CD4-positive, alpha-beta memory T cell (primary cell): ENCODE measurements at regions of chr12 and their contacts with region 1.

Region 1: DNA sequence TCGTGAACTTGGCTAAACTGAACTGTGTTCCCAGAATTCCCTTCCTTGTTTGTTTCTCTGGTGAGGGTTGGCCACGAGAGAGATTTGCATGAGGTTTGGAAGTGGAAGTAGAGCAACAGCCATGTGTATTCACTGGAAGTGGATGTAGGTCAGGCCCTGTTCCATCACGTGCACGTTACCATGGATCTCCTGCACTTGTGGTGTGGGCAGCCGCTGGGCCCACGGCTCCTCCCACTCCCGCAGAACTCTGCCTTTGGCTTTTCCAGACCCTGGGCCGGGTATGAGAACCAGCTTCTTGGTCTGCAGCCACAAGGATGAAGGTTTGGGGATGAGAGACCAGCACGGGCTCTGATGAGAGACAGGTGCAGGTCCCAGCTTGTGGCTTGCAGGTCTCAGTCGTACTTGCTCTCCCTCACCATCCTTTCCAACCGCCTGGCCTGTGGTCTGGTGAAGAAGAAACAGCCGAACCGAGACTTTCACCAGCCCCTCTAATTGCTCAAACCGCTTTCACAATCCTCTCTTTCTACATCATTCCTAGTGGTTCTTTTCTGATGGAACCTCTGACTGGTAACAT is 94.9 kb downstream of the DUSP16 start:
- DNase-seq: peak; percentile 76 to 88 (median 85)
- H3K4me3 ChIP-seq: peak overlapping the region in 1 of 2 donors; percentile 12
- H3K4me3 Mint-ChIP-seq: peak overlapping the region; percentile 52 to 83 (median 62)
- H3K27ac ChIP-seq: peak overlapping the region; percentile 82
- H3K27ac Mint-ChIP-seq: peak overlapping the region; percentile 98 to 100 (median 99)
- H3K4me1 ChIP-seq: peaks cover 78% of the 10 kb centered on the region
- H3K4me1 Mint-ChIP-seq: peaks cover 55 to 90% (median 76%) of the 10 kb centered on the region in 4 donors
- H3K27me3 ChIP-seq: no peaks in the 10 kb centered on the region
- H3K27me3 Mint-ChIP-seq: no peaks in the 10 kb centered on the region

Region 2: GRCh38 chr12:12442548-12443071 is 25.2 kb before region 1 on chr12:
- CTCF ChIA-PET with region 1: interaction called, 63 read pairs
- POLR2A ChIA-PET with region 1: interaction called, 252 read pairs
- intact Hi-C with region 1: loop called (anchors 1 kb)
- DNase-seq: no peak
- H3K4me3 ChIP-seq: no peak overlapping the region
- H3K4me3 Mint-ChIP-seq: peak overlapping the region in 6 of 8 donors; percentile 8 to 85 (median 70)
- H3K27ac ChIP-seq: peak overlapping the region; percentile 65
- H3K27ac Mint-ChIP-seq: peak overlapping the region; percentile 90 to 99 (median 98)
- H3K4me1 ChIP-seq: peaks cover 95% of the 10 kb centered on the region
- H3K4me1 Mint-ChIP-seq: peaks cover 68 to 93% (median 80%) of the 10 kb centered on the region in 4 donors
- H3K27me3 ChIP-seq: no peaks in the 10 kb centered on the region
- H3K27me3 Mint-ChIP-seq: no peaks in the 10 kb centered on the region

Region 3: DNA sequence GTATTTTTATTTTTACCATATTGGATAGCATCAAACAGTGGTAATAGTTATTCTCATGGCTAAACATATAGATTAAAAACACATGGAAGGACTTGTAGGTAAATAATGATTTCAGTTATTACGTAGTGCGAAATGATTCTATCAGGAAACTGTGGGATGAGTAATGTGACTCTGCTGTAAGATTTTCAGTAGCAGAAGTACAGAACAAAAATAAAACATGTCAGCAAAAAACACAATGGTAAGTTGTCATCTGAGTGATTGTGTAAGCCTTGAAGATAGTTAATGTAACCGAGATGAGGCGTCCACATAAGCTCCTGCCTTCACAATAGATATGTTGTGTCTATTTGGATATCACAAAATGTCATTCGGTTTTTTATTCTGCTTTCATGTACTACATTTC is 11.1 kb before region 1 on chr12:
- CTCF ChIA-PET with region 1: interaction called, 33 read pairs
- POLR2A ChIA-PET with region 1: interaction called, 970 read pairs
- intact Hi-C with region 1: loop called (anchors 1 kb)
- DNase-seq: peak in 4 of 5 donors; percentile 54 to 72 (median 54)
- H3K4me3 ChIP-seq: peak overlapping the region in 1 of 2 donors; percentile 27
- H3K4me3 Mint-ChIP-seq: peak overlapping the region; percentile 23 to 78 (median 66)
- H3K27ac ChIP-seq: peak overlapping the region; percentile 65
- H3K27ac Mint-ChIP-seq: peak overlapping the region; percentile 78 to 97 (median 92)
- H3K4me1 ChIP-seq: peaks cover 40% of the 10 kb centered on the region
- H3K4me1 Mint-ChIP-seq: peaks cover 21 to 60% (median 45%) of the 10 kb centered on the region in 4 donors
- H3K27me3 ChIP-seq: no peaks in the 10 kb centered on the region
- H3K27me3 Mint-ChIP-seq: no peaks in the 10 kb centered on the region

Region 4: DNA sequence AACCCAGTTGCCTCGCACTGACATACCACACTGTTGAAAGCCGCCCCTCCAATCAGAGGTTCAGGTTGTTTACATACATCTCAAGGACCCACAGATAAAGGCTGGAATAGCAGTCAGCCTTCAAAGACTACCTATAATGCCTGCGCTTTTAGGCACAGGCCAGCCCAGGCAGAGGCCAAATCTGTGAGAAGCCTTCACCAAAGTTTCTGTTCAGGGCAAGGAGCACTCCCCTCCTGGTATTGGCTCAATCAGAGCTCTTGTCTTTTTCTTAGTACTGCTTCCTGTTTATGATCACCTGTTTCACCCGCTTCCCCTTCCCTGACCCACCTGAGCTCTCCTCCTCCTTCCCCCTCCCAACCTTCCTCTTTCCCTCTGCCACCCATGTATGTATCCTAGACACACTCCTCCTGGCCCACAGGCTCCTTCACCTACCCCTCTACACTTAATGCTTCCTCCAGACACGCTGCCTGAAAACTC is 60.1 kb after region 1 on chr12:
- CTCF ChIA-PET with region 1: no interaction called
- POLR2A ChIA-PET with region 1: interaction called, 11 read pairs
- intact Hi-C with region 1: no loop called
- DNase-seq: peak in 3 of 5 donors; percentile 25 to 43 (median 31)
- H3K4me3 ChIP-seq: no peak overlapping the region
- H3K4me3 Mint-ChIP-seq: peak overlapping the region in 7 of 8 donors; percentile 40 to 80 (median 71)
- H3K27ac ChIP-seq: peak overlapping the region; percentile 56
- H3K27ac Mint-ChIP-seq: peak overlapping the region; percentile 64 to 96 (median 94)
- H3K4me1 ChIP-seq: peaks cover 52% of the 10 kb centered on the region
- H3K4me1 Mint-ChIP-seq: peaks cover 37 to 61% (median 52%) of the 10 kb centered on the region in 4 donors
- H3K27me3 ChIP-seq: no peaks in the 10 kb centered on the region
- H3K27me3 Mint-ChIP-seq: no peaks in the 10 kb centered on the region

Region 5: DNA sequence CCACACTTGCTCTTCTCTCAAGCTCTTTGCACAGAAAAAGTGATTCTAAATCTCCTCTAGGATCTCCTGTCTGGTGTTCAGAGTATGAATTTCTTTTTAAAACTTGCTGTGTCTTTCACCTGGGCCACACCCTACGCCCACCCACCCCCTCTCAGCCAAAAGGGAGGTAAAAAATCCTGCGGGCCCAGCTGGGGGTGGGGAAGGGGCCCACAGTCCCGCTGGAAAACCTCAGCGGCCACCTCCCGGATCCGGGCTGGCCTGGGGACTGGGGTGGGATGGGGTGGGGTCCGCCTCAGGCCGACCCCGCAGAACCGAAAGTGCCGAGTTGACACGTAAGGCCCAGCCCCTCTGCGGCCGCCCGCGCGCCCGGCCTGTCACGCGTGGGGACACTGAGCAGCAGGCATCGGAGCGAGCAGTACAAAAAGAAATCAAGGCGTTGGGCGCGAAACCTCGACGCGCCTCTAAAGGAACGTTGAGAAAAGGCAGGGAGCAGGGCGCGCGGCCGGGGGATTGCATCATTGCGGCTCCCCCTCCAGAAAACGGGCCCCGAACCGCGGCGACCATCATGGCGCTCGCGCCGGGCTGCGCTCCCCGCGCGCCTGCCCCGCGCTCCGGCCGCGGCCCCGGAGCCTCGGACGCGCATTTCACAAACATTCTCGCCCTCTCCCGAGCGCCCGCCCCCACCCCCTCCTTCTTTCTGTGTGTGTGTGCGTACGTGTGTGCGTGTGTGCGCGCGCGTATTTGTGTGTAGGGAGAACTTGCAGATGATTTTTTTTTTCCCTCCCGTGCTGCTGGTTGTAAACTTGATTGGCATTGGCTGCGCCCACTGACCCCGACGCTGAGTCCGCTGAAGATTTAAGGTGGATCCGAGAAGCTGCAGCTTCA is 257.1 kb after region 1 on chr12:
- CTCF ChIA-PET with region 1: interaction called, 4 read pairs
- POLR2A ChIA-PET with region 1: interaction called, 152 read pairs
- intact Hi-C with region 1: no loop called
- DNase-seq: peak; percentile 93 to 97 (median 96)
- H3K4me3 ChIP-seq: peak overlapping the region in 1 of 2 donors; percentile 80
- H3K4me3 Mint-ChIP-seq: peak overlapping the region; percentile 89 to 96 (median 92)
- H3K27ac ChIP-seq: peak overlapping the region; percentile 95
- H3K27ac Mint-ChIP-seq: peak overlapping the region; percentile 95 to 99 (median 97)
- H3K4me1 ChIP-seq: peaks cover 56% of the 10 kb centered on the region
- H3K4me1 Mint-ChIP-seq: peaks cover 37 to 72% (median 43%) of the 10 kb centered on the region in 4 donors
- H3K27me3 ChIP-seq: no peaks in the 10 kb centered on the region
- H3K27me3 Mint-ChIP-seq: peaks cover 0 to 1% of the 10 kb centered on the region in 2 donors